ENCODE measurements at regions of chr5 and their contacts with region 1.

Region 1: GRCh38 chr5:126536874-126537273 is 58.1 kb downstream of the ALDH7A1 start:
- DNase-seq: no peak
- CTCF ChIP-seq: no peak

Region 2: DNA sequence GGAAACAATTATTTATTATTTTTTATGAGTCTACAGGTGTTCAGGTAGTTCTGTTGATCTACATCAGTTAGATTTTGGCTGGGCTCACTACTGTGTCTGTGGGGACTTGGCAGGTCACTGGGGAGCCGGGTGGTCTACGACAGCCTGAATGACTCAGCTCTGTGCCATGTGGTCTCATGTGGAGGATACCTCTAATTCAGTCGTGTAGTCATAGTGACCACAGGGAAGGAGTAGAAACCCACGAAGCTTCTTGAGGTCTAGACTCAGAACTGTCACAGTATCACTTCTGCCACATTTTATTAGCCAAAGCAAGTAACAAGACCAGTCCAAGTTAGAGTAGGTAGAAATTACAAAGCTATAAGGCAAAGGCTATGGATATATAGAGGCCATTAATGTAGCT is 178.3 kb before region 1 on chr5:
- in situ Hi-C with region 1: loop called (anchors 5 kb)
- DNase-seq: peak; percentile 26
- CTCF ChIP-seq: no peak